Activated T-helper 1 cell treated with anti-CD3 and anti-CD28 coated beads, Interleukin-12 subunit alpha, Interleukin-12 subunit beta, Interleukin-2, Interleukin-4 antibody, amounts not matched to agents 30 ng/mL and 10 ng/mL and 1 ng/mL, durations not matched to agents 14 hours and 24 hours and 36 hours (primary cell): ENCODE measurements at regions of chr10 and their contacts with region 1.

Region 1: GRCh38 chr10:51699475-51700227 is at the start of gene CSTF2T:
- DNase-seq: peak; percentile 91
- H3K4me3 Mint-ChIP-seq: peak within 1 kb of the TSS; percentile 98
- H3K27ac Mint-ChIP-seq: peak within 1 kb of the TSS; percentile 100
- H3K4me1 Mint-ChIP-seq: peaks cover 68% of the 10 kb centered on the region
- H3K27me3 Mint-ChIP-seq: no peaks in the 10 kb centered on the region
- total RNA-seq, gene CSTF2T: 42.3 and 44.8 TPM in 2 replicates

Region 2: DNA sequence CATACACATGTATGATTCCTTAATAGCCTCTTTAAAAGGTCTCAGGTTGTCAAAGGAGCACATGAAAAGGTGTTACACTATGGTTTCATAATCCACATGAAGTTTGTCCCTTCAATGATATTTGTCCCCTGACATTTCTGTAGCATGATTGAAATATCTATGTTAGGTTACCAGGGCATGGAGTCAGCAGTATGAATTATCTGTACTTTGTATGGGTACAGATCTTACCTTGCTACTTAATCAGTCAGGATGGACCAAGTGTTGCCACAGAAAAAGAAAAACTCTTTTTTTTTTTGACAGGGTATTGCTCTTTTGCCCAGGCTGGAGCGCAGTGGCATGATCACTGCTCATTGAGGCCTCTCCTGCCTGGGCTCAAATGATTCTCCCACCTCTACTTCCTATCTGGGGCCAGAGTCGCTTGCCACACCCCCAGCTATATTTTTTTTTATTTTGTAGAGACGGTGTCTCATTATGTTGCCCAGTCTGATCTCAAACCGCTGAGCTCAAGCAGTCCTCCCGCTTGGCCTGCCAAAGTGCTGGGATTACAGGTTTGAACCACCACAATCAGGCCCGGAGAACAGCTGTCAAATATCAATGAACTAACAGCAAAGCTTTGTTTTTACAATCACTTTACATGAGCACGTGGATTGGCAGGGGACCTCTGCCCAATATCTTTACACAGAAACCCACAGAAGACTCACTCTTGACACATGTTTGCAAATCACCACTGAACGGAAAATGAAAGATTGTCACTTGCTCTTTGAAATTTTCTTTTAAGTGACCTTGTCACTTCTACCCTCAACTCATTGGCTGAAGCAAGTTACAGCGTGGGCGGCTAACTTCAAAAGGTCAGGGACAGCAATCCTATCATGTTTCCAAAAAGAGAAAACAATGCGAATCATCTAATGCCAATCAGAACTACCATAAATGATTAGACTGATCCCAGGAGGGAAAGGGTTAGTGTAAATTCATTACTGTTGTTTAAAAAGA is 485.1 kb before region 1 on chr10:
- intact Hi-C with region 1: no loop called
- DNase-seq: no peak
- H3K4me3 Mint-ChIP-seq: no peak overlapping the region
- H3K27ac Mint-ChIP-seq: no peak overlapping the region
- H3K4me1 Mint-ChIP-seq: no peaks in the 10 kb centered on the region
- H3K27me3 Mint-ChIP-seq: no peaks in the 10 kb centered on the region

Region 3: DNA sequence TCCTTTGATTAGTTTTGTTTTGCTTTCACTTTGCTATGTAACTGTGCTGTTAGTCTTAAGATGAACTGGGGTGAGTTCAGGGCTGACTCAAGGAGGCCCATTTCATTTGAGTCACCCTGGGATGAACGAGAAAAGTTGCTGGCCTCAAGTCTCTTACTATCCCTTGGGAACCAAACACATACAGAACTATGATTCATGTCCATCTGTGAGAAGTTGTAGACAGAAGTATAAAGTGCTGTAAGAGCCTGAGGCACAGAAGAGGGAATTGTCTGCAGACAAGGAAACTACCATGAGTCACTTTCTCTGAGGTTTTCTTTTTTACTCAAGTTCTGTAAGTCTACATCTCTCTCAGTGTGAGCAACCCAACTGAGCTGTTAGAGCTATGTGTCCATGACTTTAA is 179.6 kb after region 1 on chr10:
- intact Hi-C with region 1: loop called (anchors 1 kb)
- DNase-seq: peak; percentile 12
- H3K4me3 Mint-ChIP-seq: peak overlapping the region; percentile 67
- H3K27ac Mint-ChIP-seq: peak overlapping the region; percentile 52
- H3K4me1 Mint-ChIP-seq: peaks cover 26% of the 10 kb centered on the region
- H3K27me3 Mint-ChIP-seq: peaks cover 4% of the 10 kb centered on the region